Caco-2 (cell line): ENCODE measurements at regions of chr15 and their contacts with region 1.

Region 1: DNA sequence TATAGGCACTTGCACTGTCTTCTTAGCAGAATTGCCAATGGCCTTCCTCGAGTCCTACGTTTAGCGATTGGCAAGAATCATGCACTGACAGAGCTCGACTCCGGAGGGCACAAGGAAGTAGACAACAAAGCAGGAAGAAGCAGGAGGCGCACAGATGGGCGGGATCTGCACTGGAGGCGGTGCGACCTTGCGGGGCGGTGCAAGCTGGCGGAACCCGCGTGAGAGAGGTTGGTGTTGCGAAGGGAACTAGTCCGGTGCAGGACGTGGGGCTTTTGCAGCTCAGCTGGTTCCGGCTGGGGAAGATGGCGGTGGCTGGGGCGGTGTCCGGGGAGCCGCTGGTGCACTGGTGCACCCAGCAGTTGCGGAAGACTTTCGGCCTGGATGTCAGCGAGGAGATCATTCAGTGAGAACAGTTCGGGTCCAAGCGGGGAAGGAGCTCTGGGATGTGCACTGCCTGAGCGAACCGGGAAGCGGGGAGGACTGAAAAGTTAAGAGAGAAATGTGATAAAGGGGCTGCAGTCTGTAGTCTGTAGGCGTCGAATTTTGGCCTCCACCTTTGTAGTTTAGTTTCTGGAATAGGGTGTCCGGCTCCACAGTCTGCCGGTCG is at the start of gene TRIP4:
- DNase-seq: peak; percentile 96 to 97
- H3K4me3 ChIP-seq: peak within 1 kb of the TSS; percentile 53
- H3K4me3 Mint-ChIP-seq: peak within 1 kb of the TSS; percentile 87
- H3K27ac Mint-ChIP-seq: peak within 1 kb of the TSS; percentile 85
- H3K4me1 ChIP-seq: peaks cover 6% of the 10 kb centered on the region; the same call in 1 of the 2 replicates
- H3K4me1 Mint-ChIP-seq: peaks cover 7% of the 10 kb centered on the region
- H3K27me3 ChIP-seq: no peaks in the 10 kb centered on the region
- H3K27me3 Mint-ChIP-seq: no peaks in the 10 kb centered on the region
- CTCF ChIP-seq: no peak
- total RNA-seq, gene TRIP4: 24.1 and 26.2 TPM in 2 replicates

Region 2: GRCh38 chr15:64355944-64356709 is 31.5 kb before region 1 on chr15 and contains the start of gene CSNK1G1:
- CTCF ChIA-PET with region 1: interaction called, 3 read pairs
- POLR2A ChIA-PET with region 1: interaction called, 4 read pairs
- intact Hi-C with region 1: loop called (anchors 1 kb)
- DNase-seq: peak; percentile 95 to 96
- H3K4me3 ChIP-seq: peak within 1 kb of the TSS; percentile 92
- H3K4me3 Mint-ChIP-seq: peak within 1 kb of the TSS; percentile 82
- H3K27ac Mint-ChIP-seq: peak within 1 kb of the TSS; percentile 87
- H3K4me1 ChIP-seq: 0 out of 2 replicates have a peak, but pooled peaks cover 5% of the 10 kb centered on the region
- H3K4me1 Mint-ChIP-seq: peaks cover 16% of the 10 kb centered on the region
- H3K27me3 ChIP-seq: no peaks in the 10 kb centered on the region
- H3K27me3 Mint-ChIP-seq: no peaks in the 10 kb centered on the region
- CTCF ChIP-seq: peak in 1 of 2 experiments; percentile 28
- total RNA-seq, gene CSNK1G1: 11.5 and 17.5 TPM in 2 replicates

Region 3: DNA sequence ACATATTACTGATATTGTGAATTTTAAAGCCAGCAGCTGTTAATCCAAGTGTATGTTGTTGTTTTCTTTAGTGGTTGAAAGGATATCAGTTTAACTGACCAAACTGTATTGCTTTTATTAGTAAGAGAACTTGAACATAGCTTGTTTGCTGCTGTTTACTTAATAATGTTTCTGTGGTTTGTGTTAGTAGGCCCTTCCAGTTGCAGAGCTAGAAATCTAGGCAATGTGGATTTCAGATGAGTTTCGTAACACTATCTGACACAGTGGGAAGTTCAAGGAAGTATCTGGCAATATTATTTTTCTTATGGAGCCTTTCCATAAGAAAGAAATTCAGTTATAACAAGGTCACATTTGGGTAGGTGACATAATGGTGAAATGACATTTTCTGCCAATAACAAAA is 91.2 kb after region 1 on chr15:
- CTCF ChIA-PET with region 1: no interaction called
- POLR2A ChIA-PET with region 1: no interaction called
- intact Hi-C with region 1: no loop called
- DNase-seq: no peak
- H3K4me3 ChIP-seq: no peak overlapping the region
- H3K4me3 Mint-ChIP-seq: no peak overlapping the region
- H3K27ac Mint-ChIP-seq: no peak overlapping the region
- H3K4me1 ChIP-seq: no peaks in the 10 kb centered on the region
- H3K4me1 Mint-ChIP-seq: peaks cover 7% of the 10 kb centered on the region
- H3K27me3 ChIP-seq: no peaks in the 10 kb centered on the region
- H3K27me3 Mint-ChIP-seq: no peaks in the 10 kb centered on the region
- CTCF ChIP-seq: no peak

Region 4: DNA sequence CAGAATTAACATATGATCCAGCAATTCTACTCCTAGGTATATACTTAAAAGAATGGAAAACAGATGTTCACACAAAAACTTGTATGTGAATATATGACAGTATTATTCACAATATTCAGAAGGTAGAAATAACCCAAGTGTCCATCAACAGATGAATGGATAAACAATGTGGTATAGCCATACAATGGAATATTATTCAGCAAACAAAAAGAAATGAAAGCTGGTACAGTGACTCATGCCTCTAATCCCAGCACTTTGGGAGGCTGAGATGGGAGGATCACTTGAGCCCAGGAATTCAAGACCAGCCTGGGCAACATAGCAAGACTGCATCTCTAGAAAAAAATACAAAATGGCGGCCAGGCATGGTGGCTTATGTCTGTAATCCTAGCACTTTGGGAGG is 258.3 kb after region 1 on chr15:
- CTCF ChIA-PET with region 1: no interaction called
- POLR2A ChIA-PET with region 1: no interaction called
- intact Hi-C with region 1: no loop called
- DNase-seq: no peak
- H3K4me3 ChIP-seq: no peak overlapping the region
- H3K4me3 Mint-ChIP-seq: no peak overlapping the region
- H3K27ac Mint-ChIP-seq: no peak overlapping the region
- H3K4me1 ChIP-seq: peaks cover 37% of the 10 kb centered on the region
- H3K4me1 Mint-ChIP-seq: peaks cover 34% of the 10 kb centered on the region
- H3K27me3 ChIP-seq: no peaks in the 10 kb centered on the region
- H3K27me3 Mint-ChIP-seq: no peaks in the 10 kb centered on the region
- CTCF ChIP-seq: no peak